ENCODE measurements at regions of chr11 and their contacts with region 1.

Region 1: DNA sequence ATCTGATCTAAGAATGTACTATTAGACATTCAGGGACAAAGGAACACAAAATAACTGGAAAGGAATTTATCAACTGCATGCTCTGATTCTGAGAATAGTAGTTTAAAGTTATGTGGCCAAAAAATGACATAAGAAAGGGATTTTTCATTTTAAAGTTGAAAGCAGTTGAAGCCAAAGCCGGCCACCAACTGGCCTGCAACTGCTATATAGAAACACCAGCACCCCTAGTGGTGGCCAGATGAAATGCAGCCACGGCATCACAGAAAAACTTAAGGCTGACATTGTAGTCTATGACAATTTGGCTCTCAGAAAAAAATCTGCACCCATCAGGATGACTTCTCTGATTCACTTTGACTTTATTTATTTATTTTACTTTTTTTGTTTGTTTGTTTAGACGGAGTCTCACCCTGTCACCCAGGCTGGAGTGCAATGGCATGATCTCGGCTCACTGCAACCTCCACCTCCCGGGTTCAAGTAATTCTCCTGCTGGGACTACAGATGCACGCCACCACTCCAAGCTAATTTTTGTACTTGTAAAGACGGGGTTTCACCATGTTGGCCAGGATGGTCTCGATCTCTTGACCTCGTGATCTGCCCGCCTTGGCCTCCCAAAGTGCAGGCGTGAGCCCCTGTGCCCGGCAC is 59.2 kb downstream of the SLC35F2 start:
- DNase-seq: peak; percentile 44
- H3K4me3 ChIP-seq: no peak overlapping the region
- H3K27ac ChIP-seq: no peak overlapping the region
- H3K4me1 ChIP-seq: no peaks in the 10 kb centered on the region
- H3K27me3 ChIP-seq: no peaks in the 10 kb centered on the region
- CTCF ChIP-seq: peak; percentile 66 to 82 (median 74)
- POLR2A ChIP-seq: no peak

Region 2: DNA sequence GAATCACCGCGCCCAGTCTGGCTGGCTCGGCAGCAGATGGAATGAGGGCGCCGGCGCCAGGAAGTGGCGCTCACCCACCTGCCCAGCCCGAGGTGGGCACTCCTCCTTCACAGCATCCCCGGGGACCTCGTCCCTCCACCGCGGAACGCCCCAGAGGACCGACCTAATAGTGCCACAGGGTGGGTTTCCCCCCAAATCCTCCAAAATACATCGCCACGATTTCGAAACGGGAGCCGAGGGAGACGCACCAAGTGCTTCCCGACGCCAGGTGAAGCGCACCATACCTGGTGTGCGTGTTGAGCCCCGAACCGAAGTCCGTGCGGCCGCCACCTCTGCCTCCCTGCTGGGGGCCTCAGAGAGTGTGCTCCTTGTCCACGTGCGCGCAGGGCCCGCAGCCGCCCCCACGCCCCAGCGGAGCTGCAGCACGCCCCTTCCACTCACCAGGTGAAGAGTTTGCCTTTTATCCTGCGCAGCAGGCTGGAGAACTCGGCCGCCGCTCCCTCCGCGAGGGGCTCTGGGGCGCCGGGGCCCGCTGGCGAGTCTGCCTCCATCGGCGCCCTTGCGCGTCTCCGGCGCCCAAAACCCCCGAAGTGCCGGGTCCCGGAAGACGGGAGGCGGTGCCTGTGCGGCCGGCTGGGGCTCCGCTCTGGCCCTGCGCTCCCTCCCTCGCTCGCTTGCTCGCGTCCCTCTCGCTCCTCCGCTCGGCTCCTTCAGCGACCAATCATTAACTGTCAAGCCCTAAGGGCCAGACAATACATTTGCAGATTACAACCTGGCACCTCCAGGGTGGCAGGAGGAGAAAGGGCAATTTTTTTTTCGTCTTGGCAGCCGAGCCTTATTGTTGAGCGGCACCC is 59.1 kb after region 1 on chr11 and contains the start of gene SLC35F2:
- intact Hi-C with region 1: loop called (anchors 5 kb)
- DNase-seq: peak; percentile 67
- H3K4me3 ChIP-seq: peak within 1 kb of the TSS; percentile 70 to 78
- H3K27ac ChIP-seq: peak within 1 kb of the TSS; percentile 87 to 89
- H3K4me1 ChIP-seq: no peaks in the 10 kb centered on the region
- H3K27me3 ChIP-seq: no peaks in the 10 kb centered on the region
- CTCF ChIP-seq: peak in 1 of 4 experiments; percentile 20
- POLR2A ChIP-seq: no peak
- total RNA-seq, gene SLC35F2: 21.6 to 41.9 TPM

Region 3: GRCh38 chr11:107898270-107898669 is 98.9 kb after region 1 on chr11:
- intact Hi-C with region 1: loop called (anchors 10 kb)
- DNase-seq: peak; percentile 5
- H3K4me3 ChIP-seq: no peak overlapping the region
- H3K27ac ChIP-seq: no peak overlapping the region
- H3K4me1 ChIP-seq: no peaks in the 10 kb centered on the region
- H3K27me3 ChIP-seq: no peaks in the 10 kb centered on the region
- CTCF ChIP-seq: peak in 3 of 4 experiments; percentile 21 to 66 (median 65)
- POLR2A ChIP-seq: no peak

Measured in prostate gland (tissue), 2 donors.